Activated CD4-positive, alpha-beta T cell treated with anti-CD3 and anti-CD28 coated beads, Interleukin-2, amount 10 ng/mL, durations not matched to agents 24 days and 14 days (primary cell): ENCODE measurements at regions of chr14 and their contacts with region 1.

Region 1: GRCh38 chr14:106013879-106014376 is 487.5 kb downstream of the TMEM121 start:
- DNase-seq: peak; percentile 77
- H3K4me3 Mint-ChIP-seq: peak overlapping the region; percentile 68
- H3K27ac Mint-ChIP-seq: peak overlapping the region; percentile 93
- H3K4me1 Mint-ChIP-seq: peaks cover 52% of the 10 kb centered on the region
- H3K27me3 Mint-ChIP-seq: no peaks in the 10 kb centered on the region

Region 2: GRCh38 chr14:105861985-105862465 is 151.9 kb before region 1 on chr14:
- intact Hi-C with region 1: loop called (anchors 5 kb)
- DNase-seq: peak; percentile 83
- H3K4me3 Mint-ChIP-seq: peak overlapping the region; percentile 76
- H3K27ac Mint-ChIP-seq: peak overlapping the region; percentile 85
- H3K4me1 Mint-ChIP-seq: peaks cover 40% of the 10 kb centered on the region
- H3K27me3 Mint-ChIP-seq: peaks cover 3% of the 10 kb centered on the region

Region 3: DNA sequence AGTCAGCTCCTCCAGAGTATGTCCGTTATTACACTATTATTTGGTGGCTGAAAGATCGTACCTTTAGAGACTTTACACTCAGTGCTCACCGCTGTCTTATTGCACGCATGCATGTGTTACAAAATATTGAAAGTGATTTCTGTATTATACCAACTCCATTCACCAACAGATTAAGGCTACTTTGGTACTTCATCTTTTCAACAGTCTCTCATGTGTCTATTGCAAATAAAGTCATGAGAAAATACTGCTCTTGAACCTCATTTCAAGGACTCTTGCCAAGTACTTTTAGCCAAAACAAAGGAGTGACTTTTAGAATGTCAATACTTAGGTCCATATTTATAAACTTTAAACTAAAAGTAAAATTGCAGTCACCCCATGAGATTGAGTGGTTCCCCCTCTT is 16.0 kb after region 1 on chr14:
- intact Hi-C with region 1: loop called (anchors 2 kb)
- DNase-seq: no peak
- H3K4me3 Mint-ChIP-seq: no peak overlapping the region
- H3K27ac Mint-ChIP-seq: no peak overlapping the region
- H3K4me1 Mint-ChIP-seq: peaks cover 21% of the 10 kb centered on the region
- H3K27me3 Mint-ChIP-seq: peaks cover 1% of the 10 kb centered on the region

Region 4: GRCh38 chr14:106044949-106045600 is 31.1 kb after region 1 on chr14:
- intact Hi-C with region 1: loop called (anchors 1 kb)
- DNase-seq: peak; percentile 94
- H3K4me3 Mint-ChIP-seq: no peak overlapping the region
- H3K27ac Mint-ChIP-seq: no peak overlapping the region
- H3K4me1 Mint-ChIP-seq: peaks cover 9% of the 10 kb centered on the region
- H3K27me3 Mint-ChIP-seq: no peaks in the 10 kb centered on the region

Region 5: GRCh38 chr14:106062502-106063272 is 48.8 kb after region 1 on chr14:
- intact Hi-C with region 1: loop called (anchors 5 kb)
- DNase-seq: no peak
- H3K4me3 Mint-ChIP-seq: no peak overlapping the region
- H3K27ac Mint-ChIP-seq: no peak overlapping the region
- H3K4me1 Mint-ChIP-seq: peaks cover 13% of the 10 kb centered on the region
- H3K27me3 Mint-ChIP-seq: peaks cover 37% of the 10 kb centered on the region

Region 6: DNA sequence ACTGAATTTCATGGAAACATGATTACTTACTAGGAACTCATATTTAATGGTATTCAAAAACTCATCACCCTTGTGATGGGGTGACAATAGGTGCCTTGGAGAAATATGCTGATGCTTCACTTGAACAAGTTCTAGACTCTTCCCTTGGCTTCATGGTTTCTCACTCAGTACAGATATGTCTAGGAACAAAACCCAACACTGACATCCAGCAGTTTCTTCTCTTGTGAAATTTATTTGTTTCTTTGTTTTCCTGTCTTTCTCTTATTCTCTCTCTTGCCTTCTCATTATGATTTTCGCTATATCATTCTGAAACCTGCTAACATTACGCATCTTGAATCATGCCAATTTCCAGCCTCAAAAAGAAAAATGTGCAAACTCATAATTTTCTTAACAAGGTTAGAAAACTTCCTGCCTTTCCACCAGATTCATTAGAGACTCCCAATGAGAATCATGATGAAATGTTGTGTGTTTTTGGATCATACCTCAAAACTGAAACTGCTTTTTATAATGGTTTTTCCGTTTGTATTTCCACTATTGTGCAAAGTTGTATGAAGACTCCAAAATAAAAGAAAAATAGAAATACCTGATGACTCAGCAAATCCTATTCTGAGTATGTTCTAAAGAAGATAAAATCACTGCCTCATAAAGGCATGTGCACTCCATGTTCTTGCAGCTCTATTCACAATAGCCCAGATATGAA is 534.0 kb after region 1 on chr14:
- intact Hi-C with region 1: no loop called
- DNase-seq: no peak
- H3K4me3 Mint-ChIP-seq: no peak overlapping the region
- H3K27ac Mint-ChIP-seq: no peak overlapping the region
- H3K4me1 Mint-ChIP-seq: peaks cover 7% of the 10 kb centered on the region
- H3K27me3 Mint-ChIP-seq: peaks cover 19% of the 10 kb centered on the region